T-cell (primary cell): ENCODE measurements at regions of chr7 and their contacts with region 1.

Region 1: GRCh38 chr7:129989466-129989865 is 36.7 kb upstream of the UBE2H start:
- DNase-seq: peak in 24 of 35 experiments; percentile 2 to 50 (median 22)
- ATAC-seq: peak in 2 of 4 experiments; percentile 31 to 53
- H3K4me3 ChIP-seq: no peak overlapping the region
- H3K4me3 Mint-ChIP-seq: no peak overlapping the region
- H3K27ac ChIP-seq: no peak overlapping the region
- H3K27ac Mint-ChIP-seq: no peak overlapping the region
- H3K4me1 ChIP-seq: peaks cover 0 to 4% of the 10 kb centered on the region in 2 experiments
- H3K4me1 Mint-ChIP-seq: peaks cover 6 to 7% (median 7%) of the 10 kb centered on the region in 3 donors
- H3K27me3 ChIP-seq: no peaks in the 10 kb centered on the region
- H3K27me3 Mint-ChIP-seq: peaks cover 1 to 3% of the 10 kb centered on the region in 2 donors

Region 2: DNA sequence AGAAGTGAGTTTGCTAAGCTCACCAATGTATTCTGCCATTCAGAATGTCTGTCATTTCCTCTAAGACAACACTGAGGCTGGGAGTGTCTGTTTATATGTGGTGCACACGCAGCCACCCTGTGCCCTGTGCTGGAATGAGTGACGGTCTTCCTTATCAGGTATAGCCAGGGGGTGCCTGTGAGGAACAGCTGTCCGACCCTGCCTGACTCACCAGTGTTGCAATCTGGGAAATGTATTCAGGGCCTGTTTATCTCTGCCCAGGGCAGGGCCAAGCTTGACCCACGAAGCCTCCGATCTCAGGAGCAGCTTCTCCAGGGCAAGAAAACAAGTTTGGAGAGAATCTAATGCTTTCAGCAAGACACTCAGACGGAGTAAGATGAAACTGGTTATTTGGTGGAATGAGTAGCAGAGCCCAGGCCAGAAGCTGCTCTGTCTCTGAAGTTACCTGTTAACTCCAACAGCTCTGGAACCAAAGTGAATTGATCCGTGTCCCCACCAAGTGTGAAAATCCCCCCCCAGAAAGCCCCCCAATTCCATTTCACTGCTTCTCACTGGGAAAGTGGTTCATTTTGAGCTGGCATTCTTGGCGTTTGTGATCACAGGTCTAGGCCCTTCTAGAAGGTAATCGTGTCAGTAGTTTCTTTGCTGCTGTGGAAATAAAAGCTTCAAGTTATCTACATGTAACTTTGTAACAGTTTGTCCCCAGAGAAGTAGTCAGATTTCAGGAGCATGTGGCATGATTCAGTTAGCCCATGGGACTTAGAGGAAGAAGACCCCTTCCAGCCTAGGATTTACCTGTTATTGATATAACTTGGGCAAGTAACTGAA is 30.6 kb before region 1 on chr7:
- CTCF ChIA-PET with region 1: no interaction called
- POLR2A ChIA-PET with region 1: interaction called in 1 of 2 experiments, 16 read pairs
- DNase-seq: no peak
- ATAC-seq: no peak
- H3K4me3 ChIP-seq: no peak overlapping the region
- H3K4me3 Mint-ChIP-seq: no peak overlapping the region
- H3K27ac ChIP-seq: no peak overlapping the region
- H3K27ac Mint-ChIP-seq: no peak overlapping the region
- H3K4me1 ChIP-seq: no peaks in the 10 kb centered on the region
- H3K4me1 Mint-ChIP-seq: no peaks in the 10 kb centered on the region
- H3K27me3 ChIP-seq: no peaks in the 10 kb centered on the region
- H3K27me3 Mint-ChIP-seq: no peaks in the 10 kb centered on the region